WTC11 (cell line): ENCODE measurements at regions of chr2 and their contacts with region 1.

Region 1: GRCh38 chr2:217478831-217479455 is 523.9 kb downstream of the TNS1 start:
- DNase-seq: peak; percentile 13
- ATAC-seq: peak; percentile 75
- H3K4me3 Mint-ChIP-seq: no peak overlapping the region
- H3K27ac Mint-ChIP-seq: peak overlapping the region; percentile 21; the same call in 1 of the 2 replicates
- H3K4me1 Mint-ChIP-seq: peaks cover 25% of the 10 kb centered on the region
- H3K27me3 Mint-ChIP-seq: 0 out of 2 replicates have a peak, but pooled peaks cover 3% of the 10 kb centered on the region
- CTCF ChIP-seq: no peak

Region 2: GRCh38 chr2:217451666-217452065 is 27.3 kb before region 1 on chr2:
- CTCF ChIA-PET with region 1: no interaction called
- POLR2A ChIA-PET with region 1: no interaction called
- DNase-seq: no peak
- ATAC-seq: no peak
- H3K4me3 Mint-ChIP-seq: no peak overlapping the region
- H3K27ac Mint-ChIP-seq: no peak overlapping the region
- H3K4me1 Mint-ChIP-seq: no peaks in the 10 kb centered on the region
- H3K27me3 Mint-ChIP-seq: no peaks in the 10 kb centered on the region; the same call in 1 of the 2 replicates
- CTCF ChIP-seq: no peak

Region 3: GRCh38 chr2:217489145-217489960 is 10.4 kb after region 1 on chr2:
- CTCF ChIA-PET with region 1: no interaction called
- POLR2A ChIA-PET with region 1: no interaction called
- DNase-seq: peak; percentile 16
- ATAC-seq: peak; percentile 55
- H3K4me3 Mint-ChIP-seq: no peak overlapping the region
- H3K27ac Mint-ChIP-seq: no peak overlapping the region
- H3K4me1 Mint-ChIP-seq: 0 out of 2 replicates have a peak, but pooled peaks cover 4% of the 10 kb centered on the region
- H3K27me3 Mint-ChIP-seq: no peaks in the 10 kb centered on the region; the same call in 1 of the 2 replicates
- CTCF ChIP-seq: no peak

Region 4: DNA sequence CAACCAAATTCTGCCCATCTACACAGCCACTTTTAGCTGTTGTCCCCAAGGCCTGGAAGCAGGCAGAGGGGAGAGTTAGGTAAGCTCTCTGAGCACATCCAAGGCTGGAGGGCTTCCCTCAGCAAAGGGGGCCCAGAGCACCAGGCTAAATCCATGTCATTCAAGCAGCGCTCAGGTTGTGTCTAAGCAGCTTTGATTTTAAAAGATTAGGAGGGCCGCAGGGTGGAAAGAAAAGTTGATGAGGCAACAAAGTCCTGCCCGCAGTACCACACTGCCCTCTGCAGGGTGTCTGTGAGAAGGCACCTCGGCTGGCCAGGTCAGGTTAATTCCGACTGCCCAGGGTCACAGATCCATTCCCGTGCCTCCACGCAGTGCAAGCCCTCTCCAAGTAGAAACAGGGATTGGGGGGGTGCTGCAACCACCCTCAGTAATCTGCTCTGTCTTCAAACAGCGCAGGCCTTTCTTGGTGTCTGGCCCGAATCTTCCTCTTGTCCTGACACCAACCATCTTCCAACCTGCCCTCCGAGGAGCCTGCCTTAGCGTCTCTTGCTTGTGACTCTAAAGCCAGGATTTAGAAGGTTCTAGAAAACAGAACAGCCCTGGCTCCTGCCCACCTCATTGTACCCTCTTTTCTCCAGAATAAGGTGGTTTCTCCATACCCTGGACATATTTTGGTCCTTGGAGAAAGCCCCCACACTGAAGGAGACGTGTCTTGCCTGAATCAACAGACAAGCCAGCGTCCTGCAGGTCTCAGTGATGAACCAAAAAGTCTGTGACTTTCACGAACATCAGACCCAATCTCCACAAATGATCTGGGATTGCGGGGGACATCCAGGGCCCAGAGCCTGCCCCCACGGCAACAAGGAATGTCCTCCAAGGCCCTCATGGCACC is 234.7 kb after region 1 on chr2:
- CTCF ChIA-PET with region 1: interaction called, 11 read pairs
- POLR2A ChIA-PET with region 1: no interaction called
- DNase-seq: peak; percentile 91
- ATAC-seq: peak; percentile 89
- H3K4me3 Mint-ChIP-seq: no peak overlapping the region
- H3K27ac Mint-ChIP-seq: no peak overlapping the region
- H3K4me1 Mint-ChIP-seq: peaks cover 13% of the 10 kb centered on the region
- H3K27me3 Mint-ChIP-seq: peaks cover 3% of the 10 kb centered on the region
- CTCF ChIP-seq: peak; percentile 96